SK-N-SH (cell line): ENCODE measurements at regions of chr1 and their contacts with region 1.

Region 1: GRCh38 chr1:56584910-56585528 is 5.7 kb upstream of the PLPP3 start:
- DNase-seq: peak; percentile 62
- H3K4me3 ChIP-seq: no peak overlapping the region
- H3K27ac ChIP-seq: peak overlapping the region in 1 of 2 experiments; percentile 90; a peak in 2 of 4 replicates
- H3K4me1 ChIP-seq: peaks cover 0 to 9% of the 10 kb centered on the region in 2 experiments; a peak in 2 of 4 replicates
- H3K27me3 ChIP-seq: no peaks in the 10 kb centered on the region
- CTCF ChIP-seq: peak; percentile 87
- EP300 ChIP-seq: 0 out of 4 replicates have a peak, but pooled peaks of 1 of the 2 experiments have one; percentile 8
- RAD21 ChIP-seq: peak; percentile 98

Region 2: GRCh38 chr1:55277377-55278130 is 1307.5 kb before region 1 on chr1:
- CTCF ChIA-PET with region 1: interaction called, 70 read pairs
- POLR2A ChIA-PET with region 1: no interaction called
- DNase-seq: peak; percentile 77
- H3K4me3 ChIP-seq: no peak overlapping the region; a peak in 1 of 4 replicates
- H3K27ac ChIP-seq: no peak overlapping the region
- H3K4me1 ChIP-seq: peaks cover 3 to 10% of the 10 kb centered on the region in 2 experiments; a peak in 2 of 4 replicates
- H3K27me3 ChIP-seq: no peaks in the 10 kb centered on the region
- CTCF ChIP-seq: peak; percentile 90
- EP300 ChIP-seq: no peak
- RAD21 ChIP-seq: peak; percentile 95

Region 3: DNA sequence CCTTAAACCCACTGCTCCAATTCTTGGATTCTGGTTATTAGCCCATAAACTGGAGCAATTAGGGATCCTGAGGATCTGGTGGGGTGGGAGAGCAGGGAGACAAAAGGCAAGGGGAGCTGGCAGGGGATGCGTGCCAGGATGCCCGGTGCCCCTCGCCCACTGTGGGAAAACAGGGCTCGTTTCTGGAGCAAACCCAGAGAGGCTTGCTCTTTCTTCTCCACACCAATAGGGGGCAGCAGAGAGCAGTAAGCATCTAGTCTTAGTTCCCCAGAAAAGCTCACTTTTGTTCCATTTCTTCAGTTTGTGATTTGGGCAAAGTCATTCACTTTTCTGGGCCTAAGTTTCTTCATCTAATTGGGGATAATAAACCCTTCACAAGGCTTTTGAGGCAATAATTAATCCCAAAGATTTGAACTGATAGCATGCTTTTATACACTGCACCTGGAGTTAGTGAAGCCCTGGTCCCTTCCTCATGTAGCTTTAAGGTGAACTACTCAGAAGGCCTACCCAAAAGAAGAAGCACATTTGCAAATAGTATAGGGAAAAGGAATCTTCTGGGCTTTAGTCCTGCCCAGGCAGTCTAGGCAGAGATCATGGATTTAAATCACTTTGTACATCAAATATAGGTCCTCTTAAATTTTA is 1209.3 kb before region 1 on chr1:
- CTCF ChIA-PET with region 1: interaction called, 21 read pairs
- POLR2A ChIA-PET with region 1: no interaction called
- DNase-seq: peak; percentile 65
- H3K4me3 ChIP-seq: peak overlapping the region in 1 of 2 experiments; percentile 5; a peak in 1 of 4 replicates
- H3K27ac ChIP-seq: peak overlapping the region in 1 of 2 experiments; percentile 62; a peak in 1 of 4 replicates
- H3K4me1 ChIP-seq: peaks cover 0 to 7% of the 10 kb centered on the region in 2 experiments; a peak in 1 of 4 replicates
- H3K27me3 ChIP-seq: no peaks in the 10 kb centered on the region
- CTCF ChIP-seq: peak; percentile 88
- EP300 ChIP-seq: no peak
- RAD21 ChIP-seq: peak; percentile 77

Region 4: DNA sequence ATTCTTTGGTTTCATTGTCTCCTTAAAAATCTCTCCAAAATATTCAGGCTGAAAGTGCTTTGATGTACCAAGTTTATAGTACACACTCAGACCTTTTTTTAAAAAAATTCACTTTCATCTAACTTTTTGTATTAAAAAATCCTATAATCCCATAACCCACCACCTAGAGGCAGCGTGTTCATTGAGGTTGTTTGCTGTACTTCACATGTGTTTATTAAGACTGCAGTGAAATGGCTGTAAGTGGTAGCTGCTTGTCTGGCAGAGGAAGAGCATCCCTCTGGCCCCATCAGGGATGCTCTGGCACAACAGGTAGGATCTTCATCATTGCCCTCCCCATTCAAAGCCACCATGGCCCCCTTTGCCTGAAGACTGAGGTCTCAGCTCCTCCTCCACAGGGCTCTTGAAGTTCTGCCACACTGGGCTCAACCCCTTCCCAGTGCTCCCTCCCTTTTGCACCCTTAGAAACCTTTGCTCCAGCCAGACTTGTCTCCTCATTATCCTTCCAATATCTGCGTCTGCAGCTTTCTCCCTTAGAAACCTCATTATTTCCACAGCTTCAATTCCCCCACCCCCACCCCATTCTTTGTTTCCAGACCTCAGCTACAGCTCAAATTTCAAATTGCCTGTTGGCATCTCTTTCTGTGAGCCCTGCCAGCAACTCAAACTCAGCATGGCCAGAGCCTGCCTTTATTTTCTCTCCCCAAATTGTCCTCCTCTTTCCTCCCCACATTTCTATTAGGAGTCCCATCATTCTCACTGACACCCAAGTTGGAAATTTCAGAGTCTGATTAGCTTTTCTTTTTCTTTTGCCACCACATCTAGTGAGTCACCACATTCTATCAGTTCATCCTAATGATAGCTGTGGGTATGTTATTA is 1000.3 kb before region 1 on chr1:
- CTCF ChIA-PET with region 1: interaction called, 12 read pairs
- POLR2A ChIA-PET with region 1: no interaction called
- DNase-seq: peak; percentile 42
- H3K4me3 ChIP-seq: no peak overlapping the region
- H3K27ac ChIP-seq: peak overlapping the region; percentile 34 to 98; a peak in 3 of 4 replicates
- H3K4me1 ChIP-seq: peaks cover 20 to 23% of the 10 kb centered on the region in 2 experiments
- H3K27me3 ChIP-seq: no peaks in the 10 kb centered on the region
- CTCF ChIP-seq: peak; percentile 45
- EP300 ChIP-seq: peak in 1 of 2 experiments; percentile 21; a peak in 2 of 4 replicates
- RAD21 ChIP-seq: peak; percentile 79

Region 5: GRCh38 chr1:56573311-56573710 is 11.7 kb before region 1 on chr1:
- CTCF ChIA-PET with region 1: interaction called, 15 read pairs
- POLR2A ChIA-PET with region 1: no interaction called
- DNase-seq: peak; percentile 59
- H3K4me3 ChIP-seq: peak overlapping the region in 1 of 2 experiments; percentile 2; a peak in 1 of 4 replicates
- H3K27ac ChIP-seq: peak overlapping the region in 1 of 2 experiments; percentile 41; a peak in 1 of 4 replicates
- H3K4me1 ChIP-seq: peaks cover 0 to 24% of the 10 kb centered on the region in 2 experiments; a peak in 2 of 4 replicates
- H3K27me3 ChIP-seq: no peaks in the 10 kb centered on the region
- CTCF ChIP-seq: no peak
- EP300 ChIP-seq: peak in 1 of 2 experiments; percentile 93; a peak in 2 of 4 replicates
- RAD21 ChIP-seq: 0 out of 2 replicates have a peak, but pooled peaks have one; percentile 20

Region 6: DNA sequence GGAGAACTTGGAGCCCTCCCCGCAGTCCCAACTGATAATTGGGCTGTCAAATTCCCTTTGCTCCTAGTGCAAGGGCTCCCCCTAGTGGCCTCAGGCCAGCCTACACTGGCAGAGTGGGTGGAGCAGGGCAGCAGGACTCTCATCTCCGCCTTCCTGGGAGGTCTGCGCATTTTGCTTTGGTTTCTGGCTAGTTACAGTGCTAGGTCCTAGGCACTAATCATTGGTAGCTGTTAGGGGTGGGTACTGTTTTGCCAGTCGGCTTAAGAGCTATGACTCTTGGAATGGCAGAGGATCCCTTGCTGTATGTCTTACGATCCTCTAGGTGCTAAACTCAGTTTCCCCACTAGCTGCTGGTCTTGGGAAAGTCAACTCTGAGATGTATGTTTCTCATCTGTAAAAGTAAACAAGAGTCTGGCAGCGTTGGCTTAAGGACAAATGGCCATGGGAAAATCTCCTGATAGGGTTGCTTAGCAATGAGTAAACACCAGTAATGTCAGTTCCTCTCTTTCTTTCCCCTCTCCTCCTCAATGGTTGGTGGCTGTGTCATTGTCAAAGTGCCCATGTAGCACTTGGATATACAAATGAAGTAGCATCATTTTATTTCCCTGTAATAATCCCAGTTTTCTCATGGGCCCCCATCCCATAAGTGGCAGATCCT is 236.2 kb after region 1 on chr1:
- CTCF ChIA-PET with region 1: interaction called, 16 read pairs
- POLR2A ChIA-PET with region 1: no interaction called
- DNase-seq: peak; percentile 81
- H3K4me3 ChIP-seq: no peak overlapping the region; a peak in 1 of 4 replicates
- H3K27ac ChIP-seq: no peak overlapping the region
- H3K4me1 ChIP-seq: peaks cover 0 to 25% of the 10 kb centered on the region in 2 experiments; a peak in 2 of 4 replicates
- H3K27me3 ChIP-seq: no peaks in the 10 kb centered on the region
- CTCF ChIP-seq: peak; percentile 98
- EP300 ChIP-seq: no peak
- RAD21 ChIP-seq: peak; percentile 90

Region 7: GRCh38 chr1:57279909-57280666 is 695.1 kb after region 1 on chr1:
- CTCF ChIA-PET with region 1: no interaction called
- POLR2A ChIA-PET with region 1: no interaction called
- DNase-seq: no peak
- H3K4me3 ChIP-seq: no peak overlapping the region
- H3K27ac ChIP-seq: no peak overlapping the region
- H3K4me1 ChIP-seq: peaks cover 0 to 9% of the 10 kb centered on the region in 2 experiments; a peak in 1 of 4 replicates
- H3K27me3 ChIP-seq: no peaks in the 10 kb centered on the region
- CTCF ChIP-seq: no peak
- EP300 ChIP-seq: no peak
- RAD21 ChIP-seq: no peak